GM10248 (cell line): ENCODE measurements at regions of chr6 and their contacts with region 1.

Region 1: GRCh38 chr6:161393839-161394364 is 120.0 kb upstream of the AGPAT4 start:
- DNase-seq: peak; percentile 78
- CTCF ChIP-seq: peak; percentile 52

Region 2: DNA sequence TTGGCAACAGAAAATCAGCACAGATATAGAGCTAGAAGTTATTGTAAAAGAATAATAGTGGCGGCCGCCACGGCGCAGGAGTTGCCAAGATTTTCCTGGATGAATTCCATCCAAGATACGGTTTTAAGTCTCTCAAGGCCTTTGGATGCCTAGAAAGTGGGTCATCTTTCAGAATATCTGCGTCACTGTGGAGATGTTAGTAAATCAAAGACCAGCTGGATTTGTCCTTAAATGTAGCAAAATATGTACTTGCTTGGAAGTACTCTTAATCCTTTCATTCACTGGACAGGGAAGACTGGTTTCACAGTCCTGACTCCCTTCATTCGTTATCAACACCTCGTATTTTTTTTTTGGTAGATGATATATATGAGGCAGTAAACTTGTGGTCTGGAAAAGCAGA is 962.7 kb before region 1 on chr6:
- CTCF ChIA-PET with region 1: no interaction called
- POLR2A ChIA-PET with region 1: no interaction called
- DNase-seq: no peak
- CTCF ChIP-seq: no peak

Region 3: DNA sequence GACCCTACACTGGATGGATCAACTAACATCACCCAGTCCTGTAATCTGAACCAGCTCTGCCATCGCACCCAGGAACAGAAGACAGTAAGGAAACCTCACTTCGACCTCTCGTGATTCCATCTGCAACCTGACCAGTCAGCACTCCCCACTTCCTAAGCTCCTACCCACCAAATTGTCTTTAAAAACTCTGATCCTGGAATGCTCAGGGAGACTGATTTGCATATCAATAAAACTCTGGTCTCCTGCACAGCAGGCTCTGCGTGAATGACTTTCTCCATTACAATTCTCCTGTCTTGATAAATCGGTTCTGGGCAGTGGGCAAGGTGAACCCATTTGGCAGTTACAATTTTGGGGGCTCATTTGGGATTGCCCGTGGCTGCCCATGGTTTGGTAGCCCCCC is 101.8 kb before region 1 on chr6:
- CTCF ChIA-PET with region 1: no interaction called
- POLR2A ChIA-PET with region 1: no interaction called
- DNase-seq: no peak
- CTCF ChIP-seq: no peak

Region 4: GRCh38 chr6:161406646-161407045 is 12.7 kb after region 1 on chr6:
- CTCF ChIA-PET with region 1: interaction called, 45 read pairs
- POLR2A ChIA-PET with region 1: no interaction called
- DNase-seq: no peak
- CTCF ChIP-seq: no peak